Right ventricle myocardium inferior (tissue), 1 donor: ENCODE measurements at regions of chr1 and their contacts with region 1.

Region 1: DNA sequence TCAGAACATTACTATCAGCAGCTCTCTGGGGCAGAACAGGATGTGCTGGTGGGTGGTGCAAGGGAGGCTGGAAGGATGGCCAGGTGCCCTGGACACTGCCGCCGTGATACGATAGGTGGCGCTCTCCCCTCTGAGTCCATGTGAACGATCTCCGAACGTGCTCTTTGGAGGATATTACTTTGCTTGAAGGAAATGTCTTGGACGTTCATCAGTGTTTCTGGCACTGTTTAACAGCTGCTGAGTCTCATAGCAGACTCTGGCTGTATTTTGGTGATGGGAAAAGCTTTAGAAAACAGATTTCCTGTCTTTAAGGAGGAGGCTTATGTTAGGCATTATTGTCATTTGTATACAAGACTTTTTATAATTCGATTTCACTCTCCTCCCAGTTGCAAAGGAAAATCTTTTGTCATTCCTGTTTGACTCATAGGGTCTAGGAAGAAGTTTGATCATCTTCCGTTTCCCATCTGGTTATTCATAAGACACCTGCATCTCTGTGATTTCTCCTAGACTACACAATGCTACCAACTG is 386.2 kb upstream of the ADGRL2 start:
- DNase-seq: peak; percentile 88
- ATAC-seq: peak; percentile 89

Region 2: DNA sequence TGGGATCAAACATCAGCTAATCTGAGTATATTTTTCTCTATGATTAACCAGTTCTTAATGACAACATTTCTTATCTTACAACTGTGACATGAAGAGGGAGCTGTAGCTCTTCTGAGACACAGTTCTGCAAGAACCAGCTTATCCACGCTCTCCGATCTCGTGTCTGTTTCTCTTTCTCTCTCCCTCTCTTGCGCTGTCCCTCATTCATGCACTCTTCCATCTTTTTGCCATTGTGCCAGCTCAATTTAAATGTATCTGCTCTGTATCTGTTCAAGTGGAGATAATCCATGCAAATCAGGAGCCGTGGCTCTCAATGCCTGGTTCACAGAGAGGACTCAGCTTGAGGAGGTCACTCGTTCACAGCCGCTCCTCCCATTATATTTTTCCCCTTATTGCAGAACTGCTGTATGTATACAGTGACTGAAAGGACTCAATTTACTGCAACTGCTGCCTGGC is 108.5 kb before region 1 on chr1:
- intact Hi-C with region 1: loop called (anchors 1 kb)
- DNase-seq: no peak
- ATAC-seq: peak; percentile 84

Region 3: DNA sequence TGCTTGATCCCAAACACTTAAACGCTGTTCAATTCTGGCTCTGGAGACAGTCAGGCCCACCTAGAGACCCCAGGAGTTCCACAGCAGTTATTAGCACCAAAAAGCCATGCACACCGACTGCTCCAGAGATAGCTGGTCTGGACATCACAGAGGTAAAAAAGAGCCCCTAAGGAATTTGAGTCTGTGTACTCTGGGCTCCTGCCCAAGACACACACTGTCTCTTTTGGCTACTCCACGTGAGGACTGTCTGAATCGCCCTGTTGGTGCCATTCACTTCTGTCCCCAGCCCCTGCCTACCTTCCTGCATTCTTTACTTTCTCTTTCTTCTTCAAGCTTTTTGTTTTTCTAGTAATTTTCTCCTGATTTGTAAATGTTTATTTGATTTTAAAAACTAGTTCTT is 583.6 kb after region 1 on chr1:
- intact Hi-C with region 1: no loop called
- DNase-seq: no peak
- ATAC-seq: peak; percentile 65